PC-9 (cell line): ENCODE measurements at regions of chr18 and their contacts with region 1.

Region 1: GRCh38 chr18:3771121-3771971 is 321.4 kb downstream of the TGIF1 start:
- DNase-seq: peak; percentile 69 to 91
- H3K4me3 ChIP-seq: peak overlapping the region; percentile 51
- H3K27ac ChIP-seq: peak overlapping the region; percentile 13; the same call in 1 of the 2 replicates
- H3K4me1 ChIP-seq: peaks cover 30% of the 10 kb centered on the region
- H3K27me3 ChIP-seq: no peaks in the 10 kb centered on the region
- CTCF ChIP-seq: peak; percentile 92

Region 2: DNA sequence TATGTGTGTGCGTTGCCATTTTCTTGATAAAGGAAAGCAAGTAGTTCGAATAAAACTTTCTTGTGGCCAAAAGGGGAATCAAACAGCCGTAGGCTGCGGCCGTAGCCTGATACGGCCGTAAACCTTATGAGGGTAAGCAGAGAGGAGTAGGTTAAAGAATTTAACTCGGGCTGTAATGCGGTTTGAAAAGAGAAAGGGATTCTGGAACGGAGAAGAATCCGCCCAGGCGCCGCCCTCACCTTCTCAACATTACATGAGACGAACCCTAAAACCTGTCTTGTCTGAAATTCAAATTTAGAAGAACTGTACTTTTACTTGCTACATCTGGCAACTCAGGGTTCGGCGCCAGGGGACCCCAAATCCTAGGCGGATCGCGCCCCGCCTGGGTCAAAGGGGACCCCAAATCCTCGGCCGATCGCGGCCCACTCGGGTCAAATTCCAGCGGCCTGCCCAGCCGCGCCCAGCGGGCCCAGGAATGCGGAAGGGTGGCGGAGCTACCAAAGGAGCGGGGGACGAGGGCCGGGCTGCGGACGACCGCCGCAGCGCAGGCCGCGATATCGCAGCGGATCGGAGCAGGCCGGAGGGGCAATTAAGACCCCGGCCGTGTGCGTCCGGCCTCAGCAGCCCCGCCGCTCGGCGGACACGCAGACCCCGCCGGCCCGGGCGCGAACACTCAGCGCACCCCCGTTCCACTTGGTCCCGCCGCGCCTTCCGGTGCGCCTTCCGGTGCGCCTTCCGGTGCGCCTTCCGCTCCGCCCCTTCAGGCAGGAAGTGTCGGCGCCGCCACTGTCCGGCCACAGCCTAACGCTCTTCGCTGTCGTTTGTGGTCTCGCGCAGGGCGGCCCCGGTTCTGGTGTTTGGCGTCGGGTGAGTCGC is 509.7 kb before region 1 on chr18 and contains the start of gene MYL12B:
- CTCF ChIA-PET with region 1: no interaction called
- POLR2A ChIA-PET with region 1: no interaction called
- intact Hi-C with region 1: loop called (anchors 1 kb)
- DNase-seq: peak; percentile 77 to 89
- H3K4me3 ChIP-seq: peak within 1 kb of the TSS; percentile 100
- H3K27ac ChIP-seq: peak within 1 kb of the TSS; percentile 93
- H3K4me1 ChIP-seq: peaks cover 39% of the 10 kb centered on the region
- H3K27me3 ChIP-seq: no peaks in the 10 kb centered on the region
- CTCF ChIP-seq: no peak
- total RNA-seq, gene MYL12B: 381 and 383 TPM in 2 replicates

Region 3: DNA sequence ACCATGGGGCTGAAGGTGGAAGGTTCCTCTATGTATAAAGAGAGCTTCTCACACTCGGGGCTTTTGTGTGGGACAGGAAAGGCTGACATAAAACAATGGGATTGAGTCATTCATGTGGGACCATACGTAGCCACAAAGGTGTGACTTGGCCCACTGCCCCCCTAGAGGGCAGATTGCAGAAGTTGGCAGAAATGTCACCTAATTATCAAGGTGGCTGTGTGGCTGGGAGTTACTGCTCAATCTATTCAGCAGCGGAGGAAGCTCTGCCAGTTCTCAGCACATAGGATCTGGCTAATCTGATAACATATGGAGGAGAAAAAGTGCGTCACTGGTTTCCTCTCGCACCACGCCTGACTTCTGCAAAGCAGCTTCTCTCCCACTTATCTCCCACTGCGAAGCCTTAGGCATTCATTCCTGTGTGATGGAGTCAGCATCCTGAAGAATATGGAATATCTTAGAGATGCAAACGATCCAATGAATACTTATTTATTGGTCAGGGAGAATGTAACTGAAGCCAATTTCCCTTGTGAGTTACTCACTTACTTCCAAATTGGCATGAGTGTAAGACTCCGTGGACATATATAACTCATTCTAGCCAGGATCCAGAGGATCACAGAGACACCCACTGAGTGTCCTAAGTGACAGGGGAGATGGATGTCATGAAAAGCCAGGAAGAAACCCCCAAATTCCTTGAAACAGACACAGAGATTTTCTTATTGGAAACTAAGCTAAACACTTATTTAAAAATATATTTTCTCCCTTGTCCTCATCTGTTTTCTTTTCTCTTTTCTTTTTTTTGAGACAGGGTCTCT is 23.4 kb after region 1 on chr18:
- CTCF ChIA-PET with region 1: interaction called, 10 read pairs
- POLR2A ChIA-PET with region 1: no interaction called
- intact Hi-C with region 1: no loop called
- DNase-seq: peak; percentile 87 to 88
- H3K4me3 ChIP-seq: peak overlapping the region; percentile 20; the same call in 1 of the 2 replicates
- H3K27ac ChIP-seq: peak overlapping the region; percentile 93
- H3K4me1 ChIP-seq: peaks cover 26% of the 10 kb centered on the region
- H3K27me3 ChIP-seq: no peaks in the 10 kb centered on the region
- CTCF ChIP-seq: no peak; the same call in 1 of the 2 replicates

Region 4: GRCh38 chr18:3832025-3832638 is 60.8 kb after region 1 on chr18:
- CTCF ChIA-PET with region 1: no interaction called
- POLR2A ChIA-PET with region 1: no interaction called
- intact Hi-C with region 1: no loop called
- DNase-seq: no peak
- H3K4me3 ChIP-seq: no peak overlapping the region
- H3K27ac ChIP-seq: no peak overlapping the region
- H3K4me1 ChIP-seq: no peaks in the 10 kb centered on the region
- H3K27me3 ChIP-seq: no peaks in the 10 kb centered on the region
- CTCF ChIP-seq: no peak

Region 5: DNA sequence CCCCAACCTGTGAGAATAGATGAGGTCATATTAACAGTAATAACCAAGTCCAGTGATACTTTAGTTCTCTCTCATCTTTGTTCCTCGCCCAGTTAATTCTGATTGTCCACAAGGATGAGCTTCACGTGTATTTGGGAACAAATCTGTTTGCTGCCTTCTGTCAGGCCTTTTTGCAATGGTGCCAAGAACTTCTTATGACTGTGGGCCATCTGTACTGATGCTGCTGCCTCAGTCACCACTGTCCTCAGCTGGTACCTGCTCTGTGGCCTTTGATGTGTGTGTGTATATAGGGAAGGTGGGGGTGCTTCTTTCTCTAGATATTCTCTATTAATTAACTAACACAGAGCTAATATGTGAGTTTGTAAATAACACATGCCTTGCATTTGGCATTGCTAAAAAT is 71.5 kb after region 1 on chr18:
- CTCF ChIA-PET with region 1: no interaction called
- POLR2A ChIA-PET with region 1: no interaction called
- intact Hi-C with region 1: no loop called
- DNase-seq: no peak
- H3K4me3 ChIP-seq: no peak overlapping the region
- H3K27ac ChIP-seq: no peak overlapping the region
- H3K4me1 ChIP-seq: peaks cover 4% of the 10 kb centered on the region; the same call in 1 of the 2 replicates
- H3K27me3 ChIP-seq: no peaks in the 10 kb centered on the region
- CTCF ChIP-seq: no peak

Region 6: GRCh38 chr18:3869848-3870247 is 98.5 kb after region 1 on chr18:
- CTCF ChIA-PET with region 1: interaction called, 22 read pairs
- POLR2A ChIA-PET with region 1: no interaction called
- intact Hi-C with region 1: loop called (anchors 1 kb)
- DNase-seq: no peak
- H3K4me3 ChIP-seq: no peak overlapping the region
- H3K27ac ChIP-seq: no peak overlapping the region
- H3K4me1 ChIP-seq: no peaks in the 10 kb centered on the region
- H3K27me3 ChIP-seq: no peaks in the 10 kb centered on the region
- CTCF ChIP-seq: peak; percentile 78

Region 7: DNA sequence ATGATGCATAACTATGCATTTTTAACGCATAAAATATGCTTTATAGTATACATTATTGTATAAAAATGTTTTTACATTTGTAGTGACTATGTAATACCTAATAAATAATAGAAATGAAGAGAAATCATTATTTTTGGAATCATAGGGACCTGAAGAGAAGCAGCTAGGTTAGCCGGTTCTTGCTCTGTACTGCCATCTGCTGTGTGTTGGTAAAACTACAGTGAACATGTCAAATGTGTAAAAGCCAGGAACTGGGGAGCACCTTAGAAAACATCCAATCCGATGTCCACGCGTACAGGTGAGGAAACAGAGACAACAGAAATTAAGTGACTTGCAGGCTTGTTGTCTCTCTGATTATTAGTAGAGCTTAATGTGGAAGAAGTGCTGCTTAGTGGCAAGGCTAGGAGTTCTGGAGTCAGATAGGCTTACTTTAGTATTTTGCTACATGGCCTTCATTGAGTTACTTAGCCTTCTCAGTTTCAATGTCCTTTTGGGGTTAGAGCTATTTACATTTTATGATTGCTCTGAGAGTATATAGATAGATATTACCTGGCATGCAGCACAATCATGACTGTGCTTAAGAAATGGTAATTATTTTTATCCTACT is 297.3 kb after region 1 on chr18:
- CTCF ChIA-PET with region 1: no interaction called
- POLR2A ChIA-PET with region 1: no interaction called
- intact Hi-C with region 1: loop called (anchors 1 kb)
- DNase-seq: peak in 1 of 2 experiments; percentile 40
- H3K4me3 ChIP-seq: no peak overlapping the region
- H3K27ac ChIP-seq: no peak overlapping the region
- H3K4me1 ChIP-seq: no peaks in the 10 kb centered on the region
- H3K27me3 ChIP-seq: no peaks in the 10 kb centered on the region
- CTCF ChIP-seq: peak; percentile 86